B cell (primary cell): ENCODE measurements at regions of chr18 and their contacts with region 1.

Region 1: GRCh38 chr18:12376718-12377555 is at the start of gene AFG3L2:
- DNase-seq: peak; percentile 100
- ATAC-seq: peak; percentile 87
- H3K4me3 ChIP-seq: peak within 1 kb of the TSS; percentile 46 to 82 (median 69)
- H3K4me3 Mint-ChIP-seq: peak within 1 kb of the TSS; percentile 92
- H3K27ac ChIP-seq: peak within 1 kb of the TSS; percentile 67 to 96
- H3K27ac Mint-ChIP-seq: peak within 1 kb of the TSS; percentile 88
- H3K4me1 ChIP-seq: peaks cover 10 to 22% of the 10 kb centered on the region in 2 donors
- H3K4me1 Mint-ChIP-seq: peaks cover 33% of the 10 kb centered on the region
- H3K27me3 ChIP-seq: no peaks in the 10 kb centered on the region
- H3K27me3 Mint-ChIP-seq: no peaks in the 10 kb centered on the region
- CTCF ChIP-seq: no peak
- total RNA-seq, gene AFG3L2: 39.2 and 40.7 TPM in 2 replicates

Region 2: DNA sequence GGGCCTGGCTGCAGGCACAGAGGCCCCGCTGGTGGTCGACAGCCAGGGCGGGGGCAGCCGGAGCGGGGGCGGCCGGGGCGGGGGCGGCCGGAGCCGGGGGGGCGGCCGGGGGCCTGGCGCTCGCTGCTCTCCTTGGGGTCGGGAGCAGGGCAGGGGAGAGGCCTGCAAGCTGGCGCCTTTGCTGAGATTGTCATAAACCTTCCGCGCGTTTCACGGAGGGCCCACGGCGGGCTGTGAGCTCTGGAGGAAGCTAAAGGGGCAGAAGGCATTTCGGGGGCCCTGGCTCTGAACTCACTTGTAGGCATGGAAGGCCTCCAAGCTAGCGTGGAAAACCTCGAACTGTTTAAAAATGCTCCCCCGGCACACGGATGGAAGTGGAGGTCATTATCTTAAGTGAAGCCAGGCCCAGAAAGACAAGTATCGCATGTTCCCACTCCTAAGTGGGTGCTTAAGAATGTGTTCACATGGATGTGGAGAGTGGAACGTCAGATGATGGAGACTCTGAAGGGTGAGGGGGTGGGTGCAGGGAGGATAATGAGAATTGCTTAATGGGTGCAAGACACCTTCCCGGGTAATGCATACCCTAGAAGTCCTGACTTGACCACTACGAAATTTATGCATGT is 31.4 kb after region 1 on chr18:
- CTCF ChIA-PET with region 1: interaction called, 5 read pairs
- POLR2A ChIA-PET with region 1: interaction called, 13 read pairs
- intact Hi-C with region 1: loop called (anchors 1 kb)
- DNase-seq: peak; percentile 47
- ATAC-seq: no peak
- H3K4me3 ChIP-seq: peak overlapping the region in 4 of 5 experiments; percentile 49 to 74 (median 60)
- H3K4me3 Mint-ChIP-seq: peak overlapping the region; percentile 90
- H3K27ac ChIP-seq: no peak overlapping the region
- H3K27ac Mint-ChIP-seq: peak overlapping the region; percentile 65
- H3K4me1 ChIP-seq: peaks cover 9 to 18% of the 10 kb centered on the region in 2 donors
- H3K4me1 Mint-ChIP-seq: peaks cover 18% of the 10 kb centered on the region
- H3K27me3 ChIP-seq: peaks cover 0 to 25% (median 0%) of the 10 kb centered on the region in 4 experiments
- H3K27me3 Mint-ChIP-seq: peaks cover 14% of the 10 kb centered on the region
- CTCF ChIP-seq: no peak

Region 3: DNA sequence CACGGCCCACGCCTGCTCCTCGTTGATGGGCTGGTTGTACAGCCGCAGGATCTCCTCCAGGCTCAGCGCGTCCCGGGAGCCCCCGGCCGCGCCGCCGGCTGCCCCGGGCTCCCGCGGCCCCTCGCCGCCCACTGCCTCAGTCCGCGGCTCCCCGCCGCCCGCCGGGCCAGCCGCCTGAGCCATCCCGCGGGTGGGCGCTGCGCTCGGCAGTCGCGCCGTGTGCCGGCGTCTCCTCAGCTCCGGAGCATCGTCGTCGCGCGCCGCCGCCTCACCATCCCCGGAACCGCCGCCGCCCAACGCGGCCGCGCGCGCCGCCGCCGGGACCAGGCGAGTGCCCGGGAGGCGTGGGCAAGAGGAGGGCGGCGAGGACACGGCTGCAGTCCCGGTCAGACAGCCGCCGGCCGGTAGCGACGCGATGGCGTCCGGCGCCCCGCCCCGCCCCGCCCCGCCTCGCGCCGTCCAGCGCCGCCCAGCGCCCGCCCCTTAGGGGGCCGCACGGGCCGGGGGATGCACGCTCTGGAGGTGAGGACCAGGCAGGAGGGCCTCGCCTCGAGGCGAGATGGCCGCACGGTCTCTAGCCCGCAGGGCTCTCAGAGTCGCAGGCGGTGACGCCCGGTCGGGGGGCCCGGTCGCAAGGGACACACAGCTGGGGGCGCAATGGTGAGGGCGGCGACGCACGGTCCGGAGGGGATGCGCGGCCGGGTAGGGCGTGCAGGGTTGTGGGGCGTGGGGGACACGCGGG is 280.9 kb after region 1 on chr18 and contains the start of gene SPIRE1:
- CTCF ChIA-PET with region 1: interaction called, 3 read pairs
- POLR2A ChIA-PET with region 1: no interaction called
- intact Hi-C with region 1: loop called (anchors 1 kb)
- DNase-seq: peak; percentile 71
- ATAC-seq: peak; percentile 77
- H3K4me3 ChIP-seq: peak within 1 kb of the TSS in 4 of 5 experiments; percentile 32 to 67 (median 58)
- H3K4me3 Mint-ChIP-seq: peak within 1 kb of the TSS; percentile 94
- H3K27ac ChIP-seq: no peak within 1 kb of the TSS
- H3K27ac Mint-ChIP-seq: no peak within 1 kb of the TSS
- H3K4me1 ChIP-seq: peaks cover 9 to 11% of the 10 kb centered on the region in 2 donors
- H3K4me1 Mint-ChIP-seq: peaks cover 11% of the 10 kb centered on the region
- H3K27me3 ChIP-seq: peaks cover 0 to 34% (median 5%) of the 10 kb centered on the region in 4 experiments
- H3K27me3 Mint-ChIP-seq: peaks cover 26% of the 10 kb centered on the region
- CTCF ChIP-seq: no peak
- total RNA-seq, gene SPIRE1: 3.0 and 4.0 TPM in 2 replicates

Region 4: GRCh38 chr18:12838178-12838634 is 461.3 kb after region 1 on chr18:
- CTCF ChIA-PET with region 1: no interaction called
- POLR2A ChIA-PET with region 1: interaction called, 4 read pairs
- intact Hi-C with region 1: loop called (anchors 1 kb)
- DNase-seq: peak; percentile 31
- ATAC-seq: no peak
- H3K4me3 ChIP-seq: peak overlapping the region in 2 of 5 experiments; percentile 15 to 38
- H3K4me3 Mint-ChIP-seq: peak overlapping the region; percentile 65
- H3K27ac ChIP-seq: peak overlapping the region; percentile 51 to 76
- H3K27ac Mint-ChIP-seq: peak overlapping the region; percentile 74
- H3K4me1 ChIP-seq: peaks cover 30 to 36% of the 10 kb centered on the region in 2 donors
- H3K4me1 Mint-ChIP-seq: peaks cover 39% of the 10 kb centered on the region
- H3K27me3 ChIP-seq: no peaks in the 10 kb centered on the region
- H3K27me3 Mint-ChIP-seq: no peaks in the 10 kb centered on the region
- CTCF ChIP-seq: no peak